Right ventricle myocardium superior (tissue), 1 donor: ENCODE measurements at regions of chr16 and their contacts with region 1.

Region 1: DNA sequence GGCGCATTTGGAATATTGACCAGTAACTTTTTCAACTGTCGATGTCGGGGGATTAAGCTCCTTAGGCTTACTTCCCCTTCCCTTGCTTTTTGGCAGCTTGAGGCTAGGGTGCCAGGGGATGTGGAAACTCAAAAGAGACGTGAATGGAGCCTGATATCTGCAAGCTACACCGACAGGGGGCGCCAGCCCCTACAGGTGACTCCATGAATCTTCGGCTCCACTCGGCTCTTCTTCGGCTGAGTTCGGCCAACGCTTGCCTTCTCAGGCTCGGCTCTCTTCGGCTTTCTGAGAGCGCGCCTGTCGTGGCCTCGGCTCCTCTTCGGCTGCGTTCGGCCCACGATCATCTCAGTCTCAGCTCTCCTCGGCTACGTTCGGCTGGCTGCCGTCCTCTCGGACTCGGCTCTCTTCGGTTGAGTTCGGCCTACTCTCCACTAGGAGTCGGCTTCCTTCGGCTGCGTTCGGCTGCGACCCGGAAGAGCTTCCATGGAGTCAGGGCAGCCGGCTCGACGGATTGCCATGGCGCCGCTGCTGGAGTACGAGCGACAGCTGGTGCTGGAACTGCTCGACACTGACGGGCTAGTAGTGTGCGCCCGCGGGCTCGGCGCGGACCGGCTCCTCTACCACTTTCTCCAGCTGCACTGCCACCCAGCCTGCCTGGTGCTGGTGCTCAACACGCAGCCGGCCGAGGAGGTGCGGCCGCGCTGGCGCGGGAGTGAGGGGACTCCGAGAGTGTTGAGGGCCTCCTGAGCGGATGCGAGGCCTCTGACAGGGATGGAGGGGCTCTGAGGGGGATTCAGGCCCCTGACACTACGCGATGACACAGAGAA is at the start of gene ERCC4:
- DNase-seq: peak; percentile 100
- ATAC-seq: peak; percentile 98
- total RNA-seq, gene ERCC4: 6.0 TPM

Region 2: DNA sequence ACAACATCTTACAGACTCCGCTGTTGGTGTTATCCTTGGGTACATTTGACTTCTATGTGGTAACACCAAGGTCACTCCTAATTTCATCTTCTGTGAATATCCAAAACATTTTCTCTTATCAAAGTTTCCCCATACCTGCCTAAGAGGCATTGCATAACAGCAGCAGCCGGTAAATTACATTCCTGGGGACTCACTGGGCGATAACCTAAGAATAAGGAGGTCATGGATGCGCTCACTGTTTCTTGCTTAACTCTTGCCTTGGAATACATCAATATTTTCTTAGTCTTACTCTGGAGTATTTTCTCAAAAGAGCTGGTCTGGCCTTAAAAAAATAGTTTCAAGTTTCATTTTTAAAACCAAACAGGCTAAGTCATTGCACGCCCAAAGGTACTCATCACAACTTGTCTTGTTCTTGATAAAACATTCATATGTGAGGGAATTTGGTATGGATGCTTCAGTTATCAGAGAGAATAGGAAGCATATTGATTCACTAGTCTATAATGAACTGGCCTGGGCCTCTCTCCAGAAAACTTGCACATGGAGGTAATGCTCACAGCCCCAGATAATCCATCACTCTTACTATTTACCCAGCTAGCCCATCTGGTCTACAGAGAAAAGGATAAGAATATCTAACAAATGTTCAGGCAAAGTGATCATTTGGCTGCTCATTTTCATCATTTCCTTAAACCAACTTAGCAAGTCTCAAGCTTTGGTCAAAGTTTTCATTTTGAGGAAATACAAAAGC is 234.9 kb before region 1 on chr16:
- intact Hi-C with region 1: no loop called
- DNase-seq: no peak
- ATAC-seq: no peak

Region 3: GRCh38 chr16:13866073-13866472 is 53.8 kb before region 1 on chr16:
- intact Hi-C with region 1: loop called (anchors 10 kb)
- DNase-seq: peak; percentile 74
- ATAC-seq: peak; percentile 93

Region 4: GRCh38 chr16:13994239-13995106 is 74.6 kb after region 1 on chr16:
- intact Hi-C with region 1: no loop called
- DNase-seq: no peak
- ATAC-seq: peak; percentile 87

Region 5: GRCh38 chr16:14219983-14220382 is 300.1 kb after region 1 on chr16:
- intact Hi-C with region 1: loop called (anchors 10 kb)
- DNase-seq: no peak
- ATAC-seq: no peak

Region 6: GRCh38 chr16:14249291-14250032 is 329.6 kb after region 1 on chr16:
- intact Hi-C with region 1: loop called (anchors 10 kb)
- DNase-seq: no peak
- ATAC-seq: peak; percentile 45

Region 7: GRCh38 chr16:14285513-14286385 is 365.9 kb after region 1 on chr16:
- intact Hi-C with region 1: loop called (anchors 10 kb)
- DNase-seq: peak; percentile 96
- ATAC-seq: peak; percentile 95

Region 8: GRCh38 chr16:14529010-14529669 is 609.2 kb after region 1 on chr16:
- intact Hi-C with region 1: loop called (anchors 10 kb)
- DNase-seq: peak; percentile 54
- ATAC-seq: peak; percentile 88